ENCODE measurements at regions of chr2 and their contacts with region 1.

Region 1: GRCh38 chr2:43226558-43226954 is at the start of gene ZFP36L2:
- DNase-seq: peak; percentile 99
- H3K4me3 ChIP-seq: peak within 1 kb of the TSS; percentile 95 to 97
- H3K27ac ChIP-seq: peak within 1 kb of the TSS; percentile 94 to 95
- H3K4me1 ChIP-seq: peaks cover 19 to 53% of the 10 kb centered on the region in 2 experiments
- H3K27me3 ChIP-seq: no peaks in the 10 kb centered on the region
- CTCF ChIP-seq: no peak
- EP300 ChIP-seq: 0 out of 4 replicates have a peak, but pooled peaks of 1 of the 2 experiments have one; percentile 3
- RAD21 ChIP-seq: no peak
- polyA plus RNA-seq, gene ZFP36L2: 12.5 and 18.4 TPM in 2 replicates

Region 2: DNA sequence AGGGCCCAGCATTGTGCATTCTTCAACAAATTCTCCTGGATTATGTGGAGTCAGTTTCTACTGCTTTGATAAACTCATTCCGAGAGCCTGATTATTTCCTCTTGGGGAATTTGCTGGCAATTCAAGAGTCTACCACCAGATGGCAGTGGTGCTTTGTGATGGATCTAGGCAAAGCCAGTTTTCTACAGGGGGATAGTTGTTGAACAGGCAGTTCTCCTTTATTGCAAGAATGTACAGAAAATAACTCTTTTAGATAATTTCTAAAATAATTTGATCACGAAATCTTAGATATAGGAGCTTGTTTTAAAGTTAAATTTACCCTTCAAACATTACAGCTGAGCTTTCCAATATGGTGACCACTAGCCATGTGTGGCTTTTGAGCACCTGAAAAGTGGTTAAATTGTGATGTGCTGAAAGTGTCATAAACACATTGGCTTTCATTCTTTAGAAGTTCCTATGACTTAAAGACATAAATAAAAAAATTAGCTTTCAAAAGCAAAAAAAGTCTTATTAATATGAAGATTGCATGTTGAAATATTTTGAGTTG is 367.5 kb before region 1 on chr2:
- CTCF ChIA-PET with region 1: interaction called, 35 read pairs
- POLR2A ChIA-PET with region 1: interaction called, 3 read pairs
- DNase-seq: peak; percentile 86
- H3K4me3 ChIP-seq: no peak overlapping the region
- H3K27ac ChIP-seq: no peak overlapping the region
- H3K4me1 ChIP-seq: peaks cover 0 to 22% of the 10 kb centered on the region in 2 experiments; a peak in 1 of 4 replicates
- H3K27me3 ChIP-seq: no peaks in the 10 kb centered on the region
- CTCF ChIP-seq: peak; percentile 98
- EP300 ChIP-seq: no peak
- RAD21 ChIP-seq: peak; percentile 98

Region 3: GRCh38 chr2:42974721-42975717 is 251.5 kb before region 1 on chr2:
- CTCF ChIA-PET with region 1: interaction called, 299 read pairs
- POLR2A ChIA-PET with region 1: interaction called, 21 read pairs
- DNase-seq: peak; percentile 95
- H3K4me3 ChIP-seq: peak overlapping the region; percentile 27 to 32; a peak in 3 of 4 replicates
- H3K27ac ChIP-seq: no peak overlapping the region; a peak in 1 of 4 replicates
- H3K4me1 ChIP-seq: peaks cover 11 to 14% of the 10 kb centered on the region in 2 experiments; a peak in 3 of 4 replicates
- H3K27me3 ChIP-seq: no peaks in the 10 kb centered on the region
- CTCF ChIP-seq: peak; percentile 95
- EP300 ChIP-seq: no peak
- RAD21 ChIP-seq: peak; percentile 97

Region 4: GRCh38 chr2:43024515-43025011 is 202.0 kb before region 1 on chr2:
- CTCF ChIA-PET with region 1: interaction called, 106 read pairs
- POLR2A ChIA-PET with region 1: interaction called, 9 read pairs
- DNase-seq: peak; percentile 96
- H3K4me3 ChIP-seq: no peak overlapping the region
- H3K27ac ChIP-seq: peak overlapping the region in 1 of 2 experiments; percentile 52; a peak in 1 of 4 replicates
- H3K4me1 ChIP-seq: peaks cover 0 to 14% of the 10 kb centered on the region in 2 experiments; a peak in 1 of 4 replicates
- H3K27me3 ChIP-seq: no peaks in the 10 kb centered on the region
- CTCF ChIP-seq: peak; percentile 97
- EP300 ChIP-seq: peak in 1 of 2 experiments; percentile 33; a peak in 1 of 4 replicates
- RAD21 ChIP-seq: peak; percentile 97

Region 5: GRCh38 chr2:43139996-43140621 is 86.4 kb before region 1 on chr2:
- CTCF ChIA-PET with region 1: interaction called, 10 read pairs
- POLR2A ChIA-PET with region 1: interaction called, 3 read pairs
- DNase-seq: peak; percentile 75
- H3K4me3 ChIP-seq: no peak overlapping the region
- H3K27ac ChIP-seq: peak overlapping the region in 1 of 2 experiments; percentile 61; a peak in 2 of 4 replicates
- H3K4me1 ChIP-seq: peaks cover 0 to 21% of the 10 kb centered on the region in 2 experiments; a peak in 1 of 4 replicates
- H3K27me3 ChIP-seq: no peaks in the 10 kb centered on the region
- CTCF ChIP-seq: no peak
- EP300 ChIP-seq: no peak; a peak in 1 of 4 replicates
- RAD21 ChIP-seq: peak; percentile 16; the same call in 1 of the 2 replicates

Region 6: GRCh38 chr2:43276962-43277391 is 50.4 kb after region 1 on chr2:
- CTCF ChIA-PET with region 1: interaction called, 15 read pairs
- POLR2A ChIA-PET with region 1: interaction called, 14 read pairs
- DNase-seq: peak; percentile 56
- H3K4me3 ChIP-seq: no peak overlapping the region
- H3K27ac ChIP-seq: peak overlapping the region; percentile 42 to 95; a peak in 3 of 4 replicates
- H3K4me1 ChIP-seq: peaks cover 39 to 58% of the 10 kb centered on the region in 2 experiments
- H3K27me3 ChIP-seq: no peaks in the 10 kb centered on the region
- CTCF ChIP-seq: no peak
- EP300 ChIP-seq: no peak; a peak in 1 of 4 replicates
- RAD21 ChIP-seq: no peak

Region 7: DNA sequence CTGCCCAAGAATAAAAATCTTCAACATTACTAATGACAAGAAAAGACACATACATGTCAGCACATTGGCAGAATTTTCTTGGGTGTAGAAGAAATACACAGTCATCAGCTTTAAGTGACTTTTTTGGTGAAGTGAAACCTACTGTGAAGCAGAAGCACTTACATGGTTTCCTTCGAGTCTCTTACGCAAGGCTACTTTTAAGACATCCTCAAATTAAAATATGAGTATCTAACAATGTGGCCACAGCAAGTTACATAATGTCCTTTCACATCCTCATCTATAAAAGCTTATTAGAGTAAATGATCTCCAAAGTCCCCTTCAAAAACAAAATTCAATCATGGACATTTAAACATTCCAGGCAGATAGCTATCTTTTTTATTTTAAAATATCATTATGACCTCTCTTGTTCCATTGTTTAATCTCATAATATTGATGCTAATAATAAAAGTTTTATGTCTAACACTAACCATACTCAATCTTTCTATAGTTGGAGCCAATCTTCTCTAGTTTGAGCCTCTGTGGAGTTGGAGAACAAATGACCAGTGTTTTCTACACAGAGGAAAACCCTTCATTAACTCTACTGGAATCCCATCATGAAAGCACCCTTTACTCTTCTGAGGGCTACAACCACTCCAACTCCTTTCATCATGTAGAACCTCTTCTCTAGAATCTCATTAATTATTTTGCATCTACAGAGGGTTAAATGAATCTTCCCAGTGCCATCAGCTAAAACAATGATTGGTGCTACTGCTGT is 182.0 kb after region 1 on chr2:
- CTCF ChIA-PET with region 1: interaction called, 17 read pairs
- POLR2A ChIA-PET with region 1: no interaction called
- DNase-seq: no peak
- H3K4me3 ChIP-seq: no peak overlapping the region
- H3K27ac ChIP-seq: peak overlapping the region in 1 of 2 experiments; percentile 16; a peak in 1 of 4 replicates
- H3K4me1 ChIP-seq: peaks cover 16 to 22% of the 10 kb centered on the region in 2 experiments
- H3K27me3 ChIP-seq: no peaks in the 10 kb centered on the region
- CTCF ChIP-seq: no peak
- EP300 ChIP-seq: no peak
- RAD21 ChIP-seq: no peak

Measured in SK-N-SH (cell line).